Sigmoid colon (tissue), 7 donors: ENCODE measurements at regions of chr4 and their contacts with region 1.

Region 1: GRCh38 chr4:98995183-98996055 is at the start of gene METAP1:
- DNase-seq: peak; percentile 98
- H3K4me3 ChIP-seq: peak within 1 kb of the TSS; percentile 79 to 96 (median 90)
- H3K27ac ChIP-seq: peak within 1 kb of the TSS; percentile 90 to 94 (median 92)
- H3K4me1 ChIP-seq: peaks cover 0 to 23% (median 14%) of the 10 kb centered on the region in 4 donors
- H3K27me3 ChIP-seq: no peaks in the 10 kb centered on the region
- CTCF ChIP-seq: peak; percentile 48 to 53 (median 52)
- EP300 ChIP-seq: no peak
- POLR2A ChIP-seq: peak; percentile 38 to 55
- total RNA-seq, gene METAP1: 47.6 to 56.0 (median 51.4) TPM

Region 2: DNA sequence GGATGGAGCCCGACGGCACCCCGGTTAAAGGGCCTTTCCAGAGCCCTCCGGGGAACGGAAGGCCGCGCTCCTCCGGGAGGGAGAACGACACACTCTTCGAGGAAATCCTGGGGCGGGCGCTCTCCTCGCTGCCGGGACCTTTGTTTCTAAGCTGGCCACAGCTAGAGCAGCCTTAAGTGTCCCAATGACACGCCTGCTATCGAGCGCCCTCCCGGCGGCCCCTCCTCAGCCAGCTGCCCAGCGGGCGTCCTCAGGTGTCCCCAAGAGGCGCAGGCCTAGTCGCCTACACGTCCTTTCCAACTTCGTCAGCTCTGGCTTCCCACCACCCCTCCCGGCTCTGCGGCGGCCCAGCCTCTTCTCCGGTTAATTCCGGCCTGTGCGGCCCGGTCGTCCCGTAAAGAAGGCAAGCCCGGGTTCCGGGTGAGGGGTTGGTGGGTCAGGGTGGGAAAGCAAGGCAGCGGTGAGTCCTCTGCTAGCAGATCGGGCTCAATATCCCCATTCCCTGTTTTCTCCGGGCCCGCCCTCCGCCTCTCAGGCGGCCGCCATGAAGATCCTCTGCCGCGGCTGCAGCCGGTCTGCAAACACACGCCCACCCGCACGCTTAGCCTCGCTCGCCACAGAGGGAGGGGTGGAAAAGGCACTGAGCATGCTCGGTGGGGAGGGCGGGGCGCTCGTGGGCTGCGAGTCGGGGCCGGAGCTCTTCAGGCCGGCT is 734.7 kb before region 1 on chr4:
- intact Hi-C with region 1: loop called (anchors 2 kb)
- DNase-seq: peak; percentile 97
- H3K4me3 ChIP-seq: peak overlapping the region; percentile 68 to 97 (median 85)
- H3K27ac ChIP-seq: peak overlapping the region; percentile 97 to 98 (median 98)
- H3K4me1 ChIP-seq: peaks cover 0 to 36% (median 25%) of the 10 kb centered on the region in 4 donors
- H3K27me3 ChIP-seq: no peaks in the 10 kb centered on the region
- CTCF ChIP-seq: no peak
- EP300 ChIP-seq: no peak
- POLR2A ChIP-seq: peak; percentile 92 to 93

Region 3: GRCh38 chr4:98658287-98659105 is 336.9 kb before region 1 on chr4 and contains the start of gene TSPAN5:
- intact Hi-C with region 1: loop called (anchors 10 kb)
- DNase-seq: peak; percentile 84
- H3K4me3 ChIP-seq: peak within 1 kb of the TSS; percentile 59 to 83 (median 70)
- H3K27ac ChIP-seq: peak within 1 kb of the TSS; percentile 78 to 84 (median 80)
- H3K4me1 ChIP-seq: peaks cover 0 to 59% (median 34%) of the 10 kb centered on the region in 4 donors
- H3K27me3 ChIP-seq: no peaks in the 10 kb centered on the region
- CTCF ChIP-seq: no peak
- EP300 ChIP-seq: no peak
- POLR2A ChIP-seq: peak in 1 of 2 donors; percentile 27
- total RNA-seq, gene TSPAN5: 11.2 to 18.6 (median 13.5) TPM

Region 4: DNA sequence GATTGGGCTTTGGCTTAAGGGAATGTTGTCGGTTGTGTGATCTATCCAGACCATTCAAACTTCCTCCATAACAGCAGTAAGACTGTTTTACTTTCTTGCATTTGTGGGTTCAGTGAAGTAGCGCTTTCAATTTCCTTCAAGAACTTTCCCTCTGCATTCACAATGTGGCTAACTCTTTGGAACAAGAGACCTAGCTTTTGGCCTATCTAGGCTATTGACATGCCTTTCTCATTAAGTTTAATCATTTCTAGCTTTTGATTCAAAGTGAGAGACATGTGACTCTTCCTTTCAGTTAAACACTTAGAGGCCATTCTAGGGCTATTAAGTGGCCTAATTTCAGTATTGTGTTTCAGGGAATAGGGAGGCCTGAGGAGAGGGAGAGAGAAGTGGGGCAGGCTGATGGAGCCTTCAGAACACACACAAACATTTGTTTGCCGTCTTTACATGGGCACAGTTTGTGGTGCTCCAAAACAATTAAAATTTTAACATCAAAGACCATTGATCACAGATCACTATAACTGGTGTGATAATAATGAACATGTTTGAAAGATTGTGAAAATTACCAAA is 59.1 kb after region 1 on chr4:
- intact Hi-C with region 1: loop called (anchors 1 kb)
- DNase-seq: no peak
- H3K4me3 ChIP-seq: no peak overlapping the region
- H3K27ac ChIP-seq: no peak overlapping the region
- H3K4me1 ChIP-seq: peaks cover 0 to 30% (median 18%) of the 10 kb centered on the region in 4 donors
- H3K27me3 ChIP-seq: no peaks in the 10 kb centered on the region
- CTCF ChIP-seq: no peak
- EP300 ChIP-seq: no peak
- POLR2A ChIP-seq: no peak

Region 5: DNA sequence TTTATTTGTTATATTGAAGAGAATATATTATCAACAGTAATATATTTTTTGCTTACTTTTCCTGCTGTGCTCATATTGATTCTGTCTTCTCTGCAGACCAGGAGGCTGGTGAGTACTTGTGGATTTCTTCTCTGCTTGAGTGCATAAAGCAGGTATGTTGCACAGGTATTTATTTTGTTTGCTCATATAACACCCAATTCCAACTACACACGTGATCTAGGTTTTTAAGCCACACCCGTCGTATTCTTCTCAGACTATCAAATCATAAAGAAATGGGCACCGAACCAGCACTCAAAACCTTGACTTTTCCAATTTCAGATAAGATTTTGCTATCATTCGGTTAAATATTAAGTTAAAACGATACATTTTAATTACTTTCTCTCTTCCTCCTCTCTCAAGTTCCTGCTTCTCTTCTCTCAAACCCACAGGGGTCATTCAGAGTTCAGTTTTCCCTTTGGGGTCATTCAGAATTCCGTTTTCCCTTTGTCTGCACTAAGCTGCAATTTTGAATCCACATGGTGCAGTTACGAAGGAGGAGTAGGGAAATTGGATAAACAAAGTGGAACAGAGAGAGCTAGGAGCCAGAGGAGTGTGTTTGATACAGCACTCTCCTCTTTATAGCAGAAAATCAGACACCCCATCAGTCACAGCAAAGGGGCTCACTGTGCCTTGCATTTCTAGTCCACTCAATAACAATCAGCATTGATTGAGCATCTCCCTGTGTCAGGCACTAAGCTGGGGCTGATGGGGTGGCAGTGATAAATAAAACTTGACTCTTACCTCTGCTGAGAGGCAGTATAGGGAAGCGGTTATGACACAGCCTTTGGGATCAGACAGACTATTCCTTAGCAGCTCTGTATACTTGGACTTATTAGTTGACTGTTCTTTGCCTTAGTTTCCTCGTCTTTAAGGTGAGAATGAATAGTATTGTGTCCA is 357.5 kb after region 1 on chr4 and contains the start of gene ADH1C:
- intact Hi-C with region 1: no loop called
- DNase-seq: no peak
- H3K4me3 ChIP-seq: peak within 1 kb of the TSS in 2 of 4 donors; percentile 2 to 7
- H3K27ac ChIP-seq: peak within 1 kb of the TSS in 1 of 4 donors; percentile 11
- H3K4me1 ChIP-seq: peaks cover 0 to 8% (median 6%) of the 10 kb centered on the region in 4 donors
- H3K27me3 ChIP-seq: no peaks in the 10 kb centered on the region
- CTCF ChIP-seq: no peak
- EP300 ChIP-seq: no peak
- POLR2A ChIP-seq: no peak
- total RNA-seq, gene ADH1C: 2.6 to 25.3 (median 15.9) TPM

Region 6: DNA sequence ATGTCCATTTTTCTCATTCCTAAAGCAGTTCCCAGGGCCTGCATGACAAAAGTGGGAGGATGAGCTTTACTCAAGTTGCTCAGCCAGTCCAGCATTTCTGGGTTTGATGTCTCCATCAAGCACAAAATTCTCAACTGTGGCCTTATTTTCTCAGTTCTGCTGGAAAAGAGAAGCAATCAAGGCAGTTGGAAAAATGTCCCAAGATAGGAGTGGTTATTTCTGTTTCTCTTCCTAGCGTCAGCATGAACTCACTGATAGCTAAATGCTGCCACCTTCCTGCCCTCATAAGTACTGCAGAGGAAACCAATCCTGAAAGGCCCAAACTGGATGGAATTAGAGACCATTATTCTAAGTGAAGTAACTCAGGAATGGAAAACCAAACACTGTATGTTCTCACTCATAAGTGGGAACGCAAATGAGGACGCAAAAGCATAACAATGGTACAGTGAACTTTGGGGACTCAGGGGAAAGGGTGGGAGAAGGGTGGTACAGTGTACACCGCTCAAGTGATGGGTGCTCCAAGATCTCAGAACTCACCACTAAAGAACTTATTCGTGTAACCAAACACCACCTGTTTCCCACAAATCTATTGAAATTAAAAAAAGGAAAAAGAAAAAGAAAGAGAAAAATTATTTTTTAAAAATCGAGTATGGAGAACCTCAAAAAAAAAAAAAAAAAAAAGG is 410.2 kb after region 1 on chr4:
- intact Hi-C with region 1: loop called (anchors 5 kb)
- DNase-seq: peak; percentile 87
- H3K4me3 ChIP-seq: no peak overlapping the region
- H3K27ac ChIP-seq: peak overlapping the region; percentile 62 to 76 (median 64)
- H3K4me1 ChIP-seq: peaks cover 0 to 37% (median 31%) of the 10 kb centered on the region in 4 donors
- H3K27me3 ChIP-seq: no peaks in the 10 kb centered on the region
- CTCF ChIP-seq: peak; percentile 92 to 98 (median 96)
- EP300 ChIP-seq: no peak
- POLR2A ChIP-seq: no peak

Region 7: GRCh38 chr4:99949034-99949998 is 953.9 kb after region 1 on chr4:
- intact Hi-C with region 1: loop called (anchors 5 kb)
- DNase-seq: peak; percentile 95
- H3K4me3 ChIP-seq: peak overlapping the region; percentile 63 to 76 (median 71)
- H3K27ac ChIP-seq: peak overlapping the region; percentile 92 to 97 (median 96)
- H3K4me1 ChIP-seq: peaks cover 0 to 43% (median 37%) of the 10 kb centered on the region in 4 donors
- H3K27me3 ChIP-seq: no peaks in the 10 kb centered on the region
- CTCF ChIP-seq: peak; percentile 83 to 92 (median 83)
- EP300 ChIP-seq: no peak
- POLR2A ChIP-seq: peak in 1 of 2 donors; percentile 10